Sigmoid colon (tissue), 7 donors: ENCODE measurements at regions of chr12 and their contacts with region 1.

Region 1: DNA sequence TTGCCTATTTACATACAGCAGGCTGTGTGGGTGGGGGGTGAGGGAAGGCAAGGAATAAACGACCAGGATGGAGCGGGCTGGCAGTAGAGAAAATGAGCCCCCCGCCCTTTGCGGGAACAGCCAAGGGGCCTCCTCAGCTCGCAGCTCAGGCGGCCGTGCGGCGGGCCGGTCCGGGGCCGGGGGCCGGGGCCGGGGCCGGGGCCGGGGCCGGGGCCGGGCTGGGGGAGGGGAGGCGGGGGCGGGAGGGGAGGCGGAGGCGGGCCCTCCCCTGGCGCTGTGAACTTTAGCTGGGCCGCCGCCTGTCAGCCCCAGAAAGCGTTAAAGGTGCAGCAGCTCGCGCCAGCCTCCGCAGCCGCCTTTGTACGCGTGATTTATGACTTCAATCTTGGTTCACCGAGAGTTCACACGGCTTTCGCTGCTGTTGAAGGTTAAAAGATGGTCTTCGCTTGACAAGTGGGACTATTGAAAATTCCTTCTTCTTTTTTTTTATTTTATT is 28.8 kb downstream of the HOXC4 start:
- DNase-seq: peak; percentile 73
- H3K4me3 ChIP-seq: peak overlapping the region in 3 of 4 donors; percentile 35 to 42 (median 36)
- H3K27ac ChIP-seq: peak overlapping the region; percentile 72 to 90 (median 81)
- H3K4me1 ChIP-seq: peaks cover 0 to 15% (median 4%) of the 10 kb centered on the region in 4 donors
- H3K27me3 ChIP-seq: no peaks in the 10 kb centered on the region
- CTCF ChIP-seq: no peak
- EP300 ChIP-seq: no peak
- POLR2A ChIP-seq: no peak

Region 2: DNA sequence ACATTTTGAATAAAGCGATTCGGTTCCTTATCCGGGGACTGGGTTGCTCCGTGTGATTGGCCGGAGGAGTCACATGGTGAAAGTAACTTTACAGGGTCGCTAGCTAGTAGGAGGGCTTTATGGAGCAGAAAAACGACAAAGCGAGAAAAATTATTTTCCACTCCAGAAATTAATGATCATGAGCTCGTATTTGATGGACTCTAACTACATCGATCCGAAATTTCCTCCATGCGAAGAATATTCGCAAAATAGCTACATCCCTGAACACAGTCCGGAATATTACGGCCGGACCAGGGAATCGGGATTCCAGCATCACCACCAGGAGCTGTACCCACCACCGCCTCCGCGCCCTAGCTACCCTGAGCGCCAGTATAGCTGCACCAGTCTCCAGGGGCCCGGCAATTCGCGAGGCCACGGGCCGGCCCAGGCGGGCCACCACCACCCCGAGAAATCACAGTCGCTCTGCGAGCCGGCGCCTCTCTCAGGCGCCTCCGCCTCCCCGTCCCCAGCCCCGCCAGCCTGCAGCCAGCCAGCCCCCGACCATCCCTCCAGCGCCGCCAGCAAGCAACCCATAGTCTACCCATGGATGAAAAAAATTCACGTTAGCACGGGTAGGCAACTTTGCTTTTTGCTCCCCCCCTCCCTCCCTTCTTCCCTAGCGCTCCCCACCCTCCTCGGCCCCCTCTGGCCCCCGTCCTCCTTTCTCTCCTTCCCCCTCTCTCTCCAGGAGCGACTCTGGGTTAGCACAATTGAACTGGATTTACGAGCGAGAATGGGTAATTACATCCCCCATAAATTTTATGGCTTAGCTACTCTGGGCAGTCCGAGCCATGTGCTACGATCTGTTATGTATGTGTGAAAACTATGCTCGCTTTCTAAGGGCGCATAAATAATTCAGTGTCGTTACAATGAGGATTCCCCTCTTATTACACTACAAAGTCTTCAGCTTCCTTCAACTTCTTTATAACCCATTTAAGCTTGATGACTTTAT is 28.4 kb before region 1 on chr12 and contains the start of gene HOXC4:
- intact Hi-C with region 1: loop called (anchors 2 kb)
- DNase-seq: no peak
- H3K4me3 ChIP-seq: peak within 1 kb of the TSS; percentile 40 to 61 (median 52)
- H3K27ac ChIP-seq: peak within 1 kb of the TSS; percentile 58 to 69 (median 62)
- H3K4me1 ChIP-seq: peaks cover 0 to 41% (median 35%) of the 10 kb centered on the region in 4 donors
- H3K27me3 ChIP-seq: peaks cover 28 to 72% (median 56%) of the 10 kb centered on the region in 3 donors
- CTCF ChIP-seq: no peak
- EP300 ChIP-seq: no peak
- POLR2A ChIP-seq: no peak
- total RNA-seq, gene HOXC4: 0.66 to 1.2 (median 0.71) TPM in 3 of 4 donors, not detected in the other